ENCODE measurements at regions of chr2 and their contacts with region 1.

Region 1: DNA sequence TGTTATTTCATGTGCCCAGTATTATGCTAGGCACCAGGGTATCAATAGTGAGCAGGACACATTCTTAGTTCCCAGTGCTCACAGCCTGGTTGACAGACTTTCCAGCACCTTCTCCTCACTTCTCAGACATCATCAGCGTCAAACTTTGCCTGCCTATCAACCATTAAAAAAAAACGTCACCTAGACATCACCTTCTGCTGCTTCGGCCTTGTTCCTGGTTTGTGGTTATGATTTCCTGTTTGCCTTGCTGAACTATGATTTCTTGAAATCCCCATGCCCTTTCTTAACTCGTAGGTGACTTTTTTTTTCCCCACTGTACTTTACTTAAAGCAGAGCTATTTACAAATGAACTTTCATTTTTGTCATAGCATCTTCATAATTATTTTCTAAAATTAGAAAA is 60.4 kb upstream of the NABP1 start:
- DNase-seq: peak; percentile 89
- H3K4me3 Mint-ChIP-seq: peak overlapping the region; percentile 55
- H3K27ac Mint-ChIP-seq: peak overlapping the region; percentile 85
- H3K4me1 Mint-ChIP-seq: peaks cover 48% of the 10 kb centered on the region
- H3K27me3 Mint-ChIP-seq: no peaks in the 10 kb centered on the region

Region 2: GRCh38 chr2:191573216-191573615 is 44.4 kb before region 1 on chr2:
- intact Hi-C with region 1: loop called (anchors 1 kb)
- DNase-seq: no peak
- H3K4me3 Mint-ChIP-seq: no peak overlapping the region
- H3K27ac Mint-ChIP-seq: peak overlapping the region; percentile 26
- H3K4me1 Mint-ChIP-seq: peaks cover 41% of the 10 kb centered on the region
- H3K27me3 Mint-ChIP-seq: peaks cover 18% of the 10 kb centered on the region

Region 3: DNA sequence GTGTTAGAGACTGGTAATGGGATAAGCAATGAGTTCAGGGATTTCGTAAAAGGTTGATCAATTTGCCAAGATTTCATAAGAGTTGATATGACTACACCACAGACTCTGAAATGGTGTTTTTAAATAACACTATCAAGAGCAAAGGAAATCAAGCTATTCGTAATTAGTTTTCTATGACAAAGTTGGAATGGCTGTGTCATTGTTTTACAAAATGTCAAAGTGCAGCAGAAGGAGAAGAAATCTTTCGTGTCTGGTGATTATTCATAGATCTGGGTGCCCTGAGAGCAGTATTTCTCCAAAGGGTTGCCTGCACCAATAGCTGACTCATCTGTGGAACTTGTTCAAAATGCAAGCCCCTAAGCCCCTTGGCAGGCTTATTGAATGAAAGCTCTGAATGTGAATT is 130.5 kb after region 1 on chr2:
- intact Hi-C with region 1: loop called (anchors 5 kb)
- DNase-seq: no peak
- H3K4me3 Mint-ChIP-seq: no peak overlapping the region
- H3K27ac Mint-ChIP-seq: no peak overlapping the region
- H3K4me1 Mint-ChIP-seq: peaks cover 9% of the 10 kb centered on the region
- H3K27me3 Mint-ChIP-seq: peaks cover 53% of the 10 kb centered on the region